ENCODE measurements at regions of chr6 and their contacts with region 1.

Region 1: DNA sequence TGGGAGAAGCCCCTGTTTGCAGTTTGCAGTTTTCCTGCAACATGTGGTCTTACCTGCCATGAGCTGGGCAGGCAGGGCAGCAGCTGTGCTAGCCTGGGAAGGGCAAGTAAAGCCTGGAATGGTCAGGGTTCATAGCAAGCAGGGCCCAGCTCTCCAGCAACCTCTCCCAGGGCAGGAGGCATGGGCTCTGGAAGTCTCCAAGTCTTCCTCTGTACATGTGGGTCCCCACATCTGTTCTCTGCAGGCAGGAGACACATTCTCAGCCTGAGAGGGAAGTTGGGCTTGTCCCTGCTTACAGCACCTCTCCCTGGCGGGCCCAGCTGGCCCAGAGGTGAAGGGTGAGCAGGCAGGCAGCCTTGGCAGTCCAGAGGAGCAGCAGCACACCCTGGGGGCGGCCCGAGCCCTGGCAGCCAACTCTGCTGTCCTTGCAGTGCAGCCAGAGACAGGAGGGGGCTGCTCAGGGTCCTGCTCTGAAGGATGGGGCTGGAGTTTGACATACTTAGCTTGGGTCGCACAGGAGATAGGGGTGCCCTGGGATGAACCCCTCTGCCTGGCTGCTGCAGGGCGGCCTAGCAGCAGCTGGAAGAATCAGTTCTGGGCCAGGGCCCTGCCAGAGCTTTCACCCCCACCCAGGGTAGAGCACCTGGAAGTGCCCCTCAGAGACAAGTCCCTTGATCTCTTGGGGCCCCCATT is 176.0 kb downstream of the MRPL14 start:
- DNase-seq: peak; percentile 63 to 78 (median 73)
- ATAC-seq: peak; percentile 85
- H3K4me3 ChIP-seq: no peak overlapping the region
- H3K27ac ChIP-seq: peak overlapping the region; percentile 37; the same call in 2 of the 3 replicates
- H3K4me1 ChIP-seq: peaks cover 29 to 61% of the 10 kb centered on the region in 2 experiments
- H3K27me3 ChIP-seq: no peaks in the 10 kb centered on the region
- CTCF ChIP-seq: peak; percentile 85 to 98 (median 97)
- EP300 ChIP-seq: no peak; the same call in 1 of the 2 replicates
- POLR2A ChIP-seq: no peak
- RAD21 ChIP-seq: peak; percentile 96 to 99

Region 2: GRCh38 chr6:43838276-43839036 is 112.8 kb before region 1 on chr6:
- CTCF ChIA-PET with region 1: no interaction called
- POLR2A ChIA-PET with region 1: no interaction called
- in situ Hi-C with region 1: no loop called
- intact Hi-C with region 1: loop called (anchors 5 kb)
- DNase-seq: peak; percentile 73 to 84 (median 78)
- ATAC-seq: peak; percentile 87
- H3K4me3 ChIP-seq: no peak overlapping the region
- H3K27ac ChIP-seq: peak overlapping the region; percentile 44; the same call in 2 of the 3 replicates
- H3K4me1 ChIP-seq: peaks cover 30 to 38% of the 10 kb centered on the region in 2 experiments
- H3K27me3 ChIP-seq: peaks cover 5 to 12% of the 10 kb centered on the region in 2 experiments; a peak in 4 of 5 replicates
- CTCF ChIP-seq: peak; percentile 73 to 88 (median 81)
- EP300 ChIP-seq: 0 out of 2 replicates have a peak, but pooled peaks have one; percentile 28
- POLR2A ChIP-seq: no peak
- RAD21 ChIP-seq: peak; percentile 66 to 76

Region 3: DNA sequence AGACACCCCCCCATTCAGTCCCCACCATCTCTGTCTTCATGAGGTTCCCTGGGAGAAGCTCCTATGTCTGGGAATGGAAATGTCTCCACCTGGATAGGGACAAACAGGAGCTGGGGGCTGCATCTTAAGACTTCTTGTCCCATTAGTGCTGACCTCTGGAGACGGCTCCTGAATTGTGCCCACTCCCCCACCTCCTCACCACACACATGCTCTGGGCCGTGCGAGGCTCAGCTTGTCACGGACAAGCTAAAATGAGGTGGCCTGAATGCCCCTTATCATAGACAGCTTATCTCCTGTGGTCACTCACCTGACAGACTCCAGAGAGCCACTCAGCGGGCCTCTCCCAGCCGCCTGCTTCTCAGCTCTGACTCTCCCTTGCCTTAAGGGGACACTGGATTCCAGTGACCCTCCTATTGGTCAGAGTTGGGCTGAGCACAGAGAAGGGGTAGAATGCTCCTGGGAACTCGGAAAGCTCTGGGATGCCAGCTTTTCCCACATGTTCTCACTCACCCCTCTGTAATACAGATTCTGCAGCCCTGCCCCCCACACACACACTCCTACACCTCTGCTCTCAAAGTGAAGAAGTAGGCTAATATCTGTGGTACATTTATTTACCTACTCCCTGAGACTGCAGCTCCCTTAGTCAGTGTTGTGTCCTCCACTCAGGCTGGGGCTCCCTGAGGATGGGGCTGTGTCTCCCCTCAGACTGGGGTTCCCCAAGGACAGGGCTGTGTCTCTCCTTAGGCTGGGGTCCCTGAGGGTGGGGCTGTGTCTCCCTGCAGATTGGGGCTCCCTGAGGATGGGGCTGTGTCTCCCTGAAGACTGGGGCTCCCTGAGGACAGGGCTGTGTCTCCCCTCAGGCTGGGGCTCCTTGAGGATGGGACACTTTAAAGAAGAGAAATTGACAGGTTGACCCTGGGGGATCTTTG is 13.7 kb before region 1 on chr6:
- CTCF ChIA-PET with region 1: no interaction called
- POLR2A ChIA-PET with region 1: interaction called, 11 read pairs
- in situ Hi-C with region 1: no loop called
- intact Hi-C with region 1: no loop called
- DNase-seq: peak; percentile 73 to 84 (median 81)
- ATAC-seq: peak; percentile 79
- H3K4me3 ChIP-seq: no peak overlapping the region
- H3K27ac ChIP-seq: peak overlapping the region; percentile 32
- H3K4me1 ChIP-seq: peaks cover 46 to 52% of the 10 kb centered on the region in 2 experiments
- H3K27me3 ChIP-seq: no peaks in the 10 kb centered on the region
- CTCF ChIP-seq: no peak
- EP300 ChIP-seq: peak; percentile 80
- POLR2A ChIP-seq: no peak
- RAD21 ChIP-seq: peak; percentile 10 to 25; a peak in 2 of 4 replicates

Region 4: DNA sequence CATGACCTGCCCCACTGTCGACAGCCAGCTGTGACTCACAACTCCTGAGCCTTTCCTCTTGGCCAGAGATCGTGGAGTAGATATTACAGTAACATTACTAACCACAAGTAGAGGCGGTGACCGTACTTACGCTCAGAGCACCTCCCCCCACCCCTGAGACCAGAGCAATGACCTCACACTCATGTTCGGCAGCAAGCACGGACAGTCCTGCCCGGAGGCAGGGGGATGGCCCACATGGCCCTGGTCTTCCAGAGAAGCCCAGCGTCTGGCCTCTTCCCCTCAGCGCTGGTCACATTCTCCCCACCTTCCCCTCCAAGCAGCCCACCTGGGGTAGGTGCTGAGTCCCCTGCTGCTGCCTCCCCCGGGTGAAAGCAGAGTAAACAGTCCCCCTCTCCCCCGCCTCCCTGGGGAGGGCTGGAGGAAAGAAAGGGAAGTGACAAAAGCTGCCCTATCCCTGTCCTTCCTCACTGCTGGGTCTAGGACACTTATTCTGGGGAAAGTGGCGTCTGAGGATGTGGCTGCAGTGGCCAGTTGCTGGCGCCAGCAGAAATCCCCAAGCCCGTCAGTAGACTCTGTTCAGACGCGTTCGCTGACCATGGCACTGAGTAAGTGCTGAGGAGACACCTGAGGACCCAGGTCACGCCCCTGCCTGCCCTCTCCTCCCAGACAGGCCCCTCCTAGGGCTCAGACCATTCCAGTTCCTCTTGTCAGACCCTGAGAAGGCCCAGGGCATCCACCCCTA is 107.6 kb after region 1 on chr6:
- CTCF ChIA-PET with region 1: no interaction called
- POLR2A ChIA-PET with region 1: interaction called, 3 read pairs
- in situ Hi-C with region 1: no loop called
- intact Hi-C with region 1: loop called (anchors 1 kb)
- DNase-seq: peak; percentile 96 to 99 (median 98)
- ATAC-seq: peak; percentile 93
- H3K4me3 ChIP-seq: peak overlapping the region; percentile 21; the same call in 1 of the 2 replicates
- H3K27ac ChIP-seq: peak overlapping the region; percentile 97
- H3K4me1 ChIP-seq: peaks cover 52 to 63% of the 10 kb centered on the region in 2 experiments
- H3K27me3 ChIP-seq: no peaks in the 10 kb centered on the region
- CTCF ChIP-seq: peak in 1 of 3 experiments; percentile 19; a peak in 2 of 6 replicates
- EP300 ChIP-seq: peak; percentile 92
- POLR2A ChIP-seq: peak; percentile 87
- RAD21 ChIP-seq: peak; percentile 10 to 40; a peak in 1 of 4 replicates

Region 5: DNA sequence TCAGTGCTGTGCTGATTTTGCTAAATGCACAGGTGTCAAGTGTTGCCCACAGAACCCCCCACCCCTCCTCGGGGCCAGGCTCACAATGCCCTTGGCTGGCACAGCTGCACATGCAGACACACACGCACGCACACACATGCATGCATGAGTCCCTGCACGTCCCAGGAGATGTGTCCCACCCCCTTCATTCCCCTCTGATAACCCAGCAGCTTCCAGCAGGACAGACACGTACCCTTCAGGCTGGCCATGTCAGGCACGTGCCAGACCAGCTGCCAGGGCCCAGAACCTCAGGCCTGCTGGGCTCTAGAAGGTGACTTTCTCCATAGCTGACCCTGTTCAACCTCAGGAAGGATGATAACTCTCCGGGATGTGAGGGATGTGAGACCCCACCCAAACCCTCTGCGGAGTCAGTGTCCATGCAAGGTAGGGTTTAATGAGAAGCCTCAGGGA is 131.7 kb after region 1 on chr6:
- CTCF ChIA-PET with region 1: no interaction called
- POLR2A ChIA-PET with region 1: no interaction called
- in situ Hi-C with region 1: no loop called
- intact Hi-C with region 1: no loop called
- DNase-seq: no peak
- ATAC-seq: no peak
- H3K4me3 ChIP-seq: no peak overlapping the region
- H3K27ac ChIP-seq: no peak overlapping the region
- H3K4me1 ChIP-seq: peaks cover 15 to 20% of the 10 kb centered on the region in 2 experiments; a peak in 4 of 5 replicates
- H3K27me3 ChIP-seq: no peaks in the 10 kb centered on the region; a peak in 1 of 5 replicates
- CTCF ChIP-seq: no peak
- EP300 ChIP-seq: no peak
- POLR2A ChIP-seq: no peak
- RAD21 ChIP-seq: no peak

Measured in K562 (cell line).